ENCODE measurements at regions of chr12 and their contacts with region 1.

Region 1: DNA sequence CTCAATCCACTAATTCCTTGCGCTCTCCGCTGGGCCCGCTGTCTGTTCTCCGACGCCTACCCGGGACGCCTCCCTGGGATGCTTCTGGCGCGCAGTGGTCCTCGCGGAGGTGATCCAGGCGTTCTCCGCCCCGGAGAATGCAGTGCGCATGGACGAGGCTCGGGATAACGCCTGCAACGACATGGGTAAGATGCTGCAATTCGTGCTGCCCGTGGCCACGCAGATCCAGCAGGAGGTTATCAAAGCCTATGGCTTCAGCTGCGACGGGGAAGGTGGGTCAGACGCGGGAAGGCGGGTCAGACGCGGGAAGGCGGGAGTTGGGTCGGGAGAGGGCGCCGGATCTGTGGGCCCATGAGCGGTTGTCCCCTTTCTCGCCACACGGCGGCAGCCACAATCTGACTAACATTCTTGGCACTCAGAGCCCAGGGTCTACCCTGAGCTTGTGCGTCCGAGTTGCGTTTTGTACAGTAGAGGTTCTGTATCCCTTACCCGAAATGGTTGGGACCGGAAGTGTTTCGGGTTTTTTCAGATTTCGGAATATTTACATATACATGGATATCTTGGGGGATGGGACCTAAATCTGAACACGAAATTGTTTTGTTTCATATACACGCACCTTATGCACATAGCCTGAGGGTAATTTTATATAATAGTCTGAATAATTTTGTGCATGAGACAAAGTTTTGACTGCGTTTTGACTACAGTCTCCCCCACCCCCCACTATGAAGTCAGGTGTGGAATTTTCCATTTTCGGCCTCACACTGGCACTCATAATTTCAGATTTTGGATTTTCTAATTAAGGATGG is 762 bp downstream of the C12orf57 start:
- DNase-seq: peak in 1 of 2 donors; percentile 97
- H3K4me3 ChIP-seq: peak overlapping the region; percentile 56 to 73
- H3K27ac ChIP-seq: peak overlapping the region; percentile 95
- H3K4me1 ChIP-seq: peaks cover 34% of the 10 kb centered on the region
- H3K27me3 ChIP-seq: no peaks in the 10 kb centered on the region
- CTCF ChIP-seq: peak; percentile 54 to 98 (median 73)
- POLR2A ChIP-seq: peak in 1 of 2 donors; percentile 40

Region 2: GRCh38 chr12:7092229-7092985 is 147.8 kb after region 1 on chr12 and contains the start of gene C1R:
- intact Hi-C with region 1: loop called (anchors 5 kb)
- DNase-seq: no peak
- H3K4me3 ChIP-seq: peak within 1 kb of the TSS; percentile 60 to 68
- H3K27ac ChIP-seq: peak within 1 kb of the TSS; percentile 94
- H3K4me1 ChIP-seq: peaks cover 53% of the 10 kb centered on the region
- H3K27me3 ChIP-seq: no peaks in the 10 kb centered on the region
- CTCF ChIP-seq: peak; percentile 80 to 95 (median 89)
- POLR2A ChIP-seq: peak in 1 of 2 donors; percentile 81
- total RNA-seq, gene C1R: 830 TPM

Region 3: GRCh38 chr12:7108796-7109571 is 164.4 kb after region 1 on chr12 and contains the start of gene C1RL:
- intact Hi-C with region 1: loop called (anchors 5 kb)
- DNase-seq: peak in 1 of 2 donors; percentile 97
- H3K4me3 ChIP-seq: peak within 1 kb of the TSS; percentile 50 to 62
- H3K27ac ChIP-seq: peak within 1 kb of the TSS; percentile 96
- H3K4me1 ChIP-seq: peaks cover 36% of the 10 kb centered on the region
- H3K27me3 ChIP-seq: no peaks in the 10 kb centered on the region
- CTCF ChIP-seq: peak; percentile 95 to 99 (median 96)
- POLR2A ChIP-seq: peak in 1 of 2 donors; percentile 67
- total RNA-seq, gene C1RL: 122 TPM